ENCODE measurements at regions of chr3 and their contacts with region 1.

Region 1: GRCh38 chr3:38164966-38165680 is at the start of gene OXSR1:
- DNase-seq: peak; percentile 100
- H3K4me3 ChIP-seq: peak within 1 kb of the TSS; percentile 70 to 96 (median 83)
- H3K27ac ChIP-seq: peak within 1 kb of the TSS; percentile 99
- H3K4me1 ChIP-seq: peaks cover 31% of the 10 kb centered on the region
- H3K27me3 ChIP-seq: no peaks in the 10 kb centered on the region
- CTCF ChIP-seq: no peak
- total RNA-seq, gene OXSR1: 48.3 to 70.6 TPM

Region 2: DNA sequence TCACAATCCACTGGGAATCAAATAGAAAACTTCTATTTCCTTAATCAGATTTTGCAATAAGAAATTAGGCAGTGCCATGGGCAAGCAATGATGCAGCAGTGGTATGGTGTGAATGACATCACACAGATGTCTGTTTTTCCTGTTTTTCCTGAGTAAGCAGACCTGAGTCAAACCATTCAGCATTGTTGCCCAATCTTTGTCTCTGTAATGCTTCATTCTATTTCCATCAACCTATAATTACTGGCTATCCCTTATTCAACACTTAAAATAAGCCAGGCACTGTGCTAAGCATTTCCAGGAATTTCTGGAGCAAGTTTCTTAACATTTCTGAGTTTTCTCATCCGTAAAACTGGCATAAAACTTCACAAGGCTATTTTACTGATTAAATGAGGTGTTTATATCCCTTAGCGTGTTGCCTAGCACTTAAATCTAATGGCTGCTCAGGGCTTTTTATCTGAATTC is 11.1 kb before region 1 on chr3:
- CTCF ChIA-PET with region 1: no interaction called
- dilution Hi-C with region 1: no loop called
- in situ Hi-C with region 1: no loop called
- intact Hi-C with region 1: loop called (anchors 1 kb)
- DNase-seq: peak; percentile 94
- H3K4me3 ChIP-seq: no peak overlapping the region
- H3K27ac ChIP-seq: peak overlapping the region; percentile 93
- H3K4me1 ChIP-seq: peaks cover 58% of the 10 kb centered on the region
- H3K27me3 ChIP-seq: no peaks in the 10 kb centered on the region
- CTCF ChIP-seq: no peak